ENCODE measurements at regions of chr1 and their contacts with region 1.

Region 1: GRCh38 chr1:46179138-46180081 is 3.1 kb upstream of the P3R3URF start:
- DNase-seq: peak; percentile 75 to 87
- H3K4me3 ChIP-seq: no peak overlapping the region
- H3K27ac ChIP-seq: peak overlapping the region; percentile 19 to 31
- H3K4me1 ChIP-seq: no peaks in the 10 kb centered on the region
- H3K27me3 ChIP-seq: no peaks in the 10 kb centered on the region
- CTCF ChIP-seq: peak; percentile 85 to 96 (median 92)
- POLR2A ChIP-seq: no peak

Region 2: GRCh38 chr1:45550401-45551351 is 628.7 kb before region 1 on chr1 and contains the start of gene AKR1A1:
- intact Hi-C with region 1: loop called (anchors 10 kb)
- DNase-seq: peak; percentile 81 to 85
- H3K4me3 ChIP-seq: peak within 1 kb of the TSS; percentile 54 to 81
- H3K27ac ChIP-seq: peak within 1 kb of the TSS; percentile 81 to 93
- H3K4me1 ChIP-seq: no peaks in the 10 kb centered on the region
- H3K27me3 ChIP-seq: no peaks in the 10 kb centered on the region
- CTCF ChIP-seq: peak in 1 of 4 experiments; percentile 19
- POLR2A ChIP-seq: peak; percentile 29 to 60
- total RNA-seq, gene AKR1A1: 75.3 to 162 (median 106) TPM

Region 3: GRCh38 chr1:46036894-46037839 is 142.2 kb before region 1 on chr1:
- intact Hi-C with region 1: loop called (anchors 2 kb)
- DNase-seq: peak; percentile 82 to 83
- H3K4me3 ChIP-seq: no peak overlapping the region
- H3K27ac ChIP-seq: no peak overlapping the region
- H3K4me1 ChIP-seq: no peaks in the 10 kb centered on the region
- H3K27me3 ChIP-seq: no peaks in the 10 kb centered on the region
- CTCF ChIP-seq: peak; percentile 94 to 95 (median 95)
- POLR2A ChIP-seq: no peak